ENCODE measurements at regions of chr6 and their contacts with region 1.

Region 1: GRCh38 chr6:125858427-125859320 is 67.9 kb downstream of the NCOA7 start:
- DNase-seq: peak; percentile 77
- H3K4me3 Mint-ChIP-seq: no peak overlapping the region
- H3K27ac Mint-ChIP-seq: no peak overlapping the region
- H3K4me1 Mint-ChIP-seq: peaks cover 4% of the 10 kb centered on the region
- H3K27me3 Mint-ChIP-seq: no peaks in the 10 kb centered on the region

Region 2: DNA sequence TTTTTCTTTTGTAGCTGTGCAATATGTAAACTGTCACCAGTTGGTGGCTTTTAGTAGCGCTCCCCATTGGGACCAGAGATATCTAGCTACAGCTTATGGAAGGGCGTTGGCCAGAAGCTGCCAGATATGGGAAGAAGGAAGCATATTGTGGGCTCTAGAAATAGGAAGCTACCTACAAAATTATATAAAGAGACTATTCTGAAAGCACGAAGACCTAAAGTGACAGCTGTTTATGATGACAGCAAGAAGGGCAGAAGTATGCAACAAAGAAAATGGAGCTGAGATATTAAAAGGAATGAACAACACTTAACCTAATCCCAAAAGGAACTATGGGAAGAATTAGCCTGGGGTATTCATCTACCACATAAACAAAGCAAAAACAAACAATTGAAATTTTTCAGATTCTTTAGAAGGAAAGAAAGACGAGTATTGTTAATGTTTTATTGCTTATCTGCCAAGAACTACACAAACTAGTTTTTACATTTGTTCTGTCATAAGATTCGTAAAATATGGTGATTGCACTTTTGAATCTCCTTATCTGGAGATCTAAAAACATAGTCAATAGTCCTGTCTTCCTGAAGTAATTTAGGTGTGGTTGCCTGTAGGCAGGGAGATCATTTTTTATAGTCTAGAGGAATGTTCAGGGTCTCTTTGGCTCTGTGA is 13.7 kb after region 1 on chr6:
- intact Hi-C with region 1: loop called (anchors 2 kb)
- DNase-seq: no peak
- H3K4me3 Mint-ChIP-seq: no peak overlapping the region
- H3K27ac Mint-ChIP-seq: no peak overlapping the region
- H3K4me1 Mint-ChIP-seq: peaks cover 3% of the 10 kb centered on the region
- H3K27me3 Mint-ChIP-seq: no peaks in the 10 kb centered on the region

Region 3: DNA sequence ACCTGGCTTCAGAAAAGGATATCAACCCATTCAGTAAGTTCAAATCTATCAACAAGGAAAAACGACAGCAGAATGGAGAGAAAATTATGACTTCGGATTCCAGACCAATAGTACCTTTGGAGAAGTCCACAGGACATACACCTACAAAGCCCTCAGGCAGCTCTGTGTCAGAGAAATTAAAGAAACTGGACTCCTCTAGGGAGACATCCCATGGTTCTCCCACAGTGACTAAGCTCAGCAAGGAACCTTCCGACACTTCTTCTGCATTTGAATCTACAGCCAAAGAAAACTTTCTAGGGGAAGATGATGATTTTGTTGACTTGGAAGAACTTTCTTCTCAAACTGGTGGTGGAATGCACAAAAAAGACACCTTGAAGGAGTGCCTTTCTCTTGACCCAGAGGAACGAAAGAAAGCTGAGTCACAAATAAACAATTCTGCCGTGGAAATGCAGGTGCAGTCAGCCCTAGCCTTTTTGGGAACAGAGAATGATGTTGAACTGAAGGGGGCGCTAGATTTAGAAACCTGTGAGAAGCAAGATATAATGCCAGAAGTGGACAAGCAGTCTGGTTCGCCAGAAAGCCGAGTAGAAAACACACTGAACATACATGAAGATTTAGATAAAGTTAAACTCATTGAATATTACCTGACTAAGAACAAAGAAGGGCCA is 30.4 kb after region 1 on chr6:
- intact Hi-C with region 1: loop called (anchors 5 kb)
- DNase-seq: peak; percentile 75
- H3K4me3 Mint-ChIP-seq: no peak overlapping the region
- H3K27ac Mint-ChIP-seq: no peak overlapping the region
- H3K4me1 Mint-ChIP-seq: peaks cover 5% of the 10 kb centered on the region
- H3K27me3 Mint-ChIP-seq: no peaks in the 10 kb centered on the region

Region 4: DNA sequence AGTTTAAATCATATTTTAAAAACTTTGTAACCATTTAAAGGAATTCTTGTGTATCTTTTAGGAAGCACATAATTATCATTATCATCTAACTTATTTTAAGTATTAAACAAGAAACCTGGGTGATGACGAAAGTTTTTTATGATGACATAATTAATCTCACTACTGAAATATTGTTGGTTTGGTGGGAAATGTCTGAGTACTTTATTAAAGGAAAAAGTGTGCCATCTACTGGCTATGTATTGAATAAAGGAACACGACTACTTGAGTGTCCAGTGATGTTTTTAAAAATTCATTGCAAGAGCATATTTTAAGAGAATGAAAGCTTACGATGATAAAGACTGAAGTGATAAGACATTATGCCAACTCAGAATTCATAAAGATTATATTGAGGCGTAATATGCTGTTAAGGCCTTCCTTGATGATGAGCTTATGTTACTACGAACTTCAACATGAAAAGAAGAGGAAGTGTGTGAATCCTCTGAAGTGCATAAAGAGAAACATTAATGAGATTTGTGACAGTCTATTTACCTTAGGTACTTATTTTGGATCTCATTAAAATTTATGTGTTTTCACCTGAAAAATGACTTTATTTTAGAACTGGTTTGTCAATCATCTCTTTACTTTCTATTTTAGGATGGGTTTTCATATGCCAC is 115.7 kb after region 1 on chr6:
- intact Hi-C with region 1: loop called (anchors 2 kb)
- DNase-seq: no peak
- H3K4me3 Mint-ChIP-seq: no peak overlapping the region
- H3K27ac Mint-ChIP-seq: no peak overlapping the region
- H3K4me1 Mint-ChIP-seq: peaks cover 3% of the 10 kb centered on the region
- H3K27me3 Mint-ChIP-seq: no peaks in the 10 kb centered on the region

Measured in activated CD4-positive, alpha-beta T cell treated with anti-CD3 and anti-CD28 coated beads, Interleukin-2, amount 10 ng/mL, durations not matched to agents 24 days and 14 days (primary cell).